Heart right ventricle (tissue), 16 donors: ENCODE measurements at regions of chr7 and their contacts with region 1.

Region 1: DNA sequence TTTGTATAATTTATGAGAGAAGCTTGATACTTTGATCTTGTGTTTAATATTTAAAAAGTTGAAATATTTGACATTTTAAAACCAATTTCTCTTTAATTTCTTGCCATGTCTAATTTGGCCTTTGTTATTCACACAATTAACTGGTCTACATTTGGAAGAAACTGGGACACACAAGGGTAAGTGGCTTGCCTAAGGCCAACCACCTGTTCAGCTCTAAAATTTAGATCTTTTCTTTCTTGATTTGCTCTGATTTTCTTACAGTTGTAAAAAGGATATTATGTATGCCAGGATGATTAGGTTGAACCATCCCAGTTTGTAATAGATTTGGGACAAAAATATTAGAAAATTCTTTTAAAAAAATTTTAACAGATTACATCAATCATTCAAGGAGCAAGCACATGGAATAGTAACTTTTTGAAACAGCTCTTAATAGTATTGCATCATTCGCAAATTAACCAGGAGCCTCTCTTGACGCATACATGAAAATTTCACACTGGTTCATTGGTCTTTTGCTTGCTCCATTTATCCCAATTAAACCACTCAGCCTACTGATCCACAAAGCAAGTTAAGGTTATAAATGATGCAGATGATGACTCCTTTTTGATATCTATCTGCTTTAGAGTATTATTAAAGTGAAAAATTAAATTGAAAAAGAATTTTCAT is 222.4 kb upstream of the SLC26A5 start:
- DNase-seq: no peak
- ATAC-seq: no peak
- H3K4me3 ChIP-seq: no peak overlapping the region
- H3K27ac ChIP-seq: no peak overlapping the region
- H3K4me1 ChIP-seq: no peaks in the 10 kb centered on the region
- H3K27me3 ChIP-seq: no peaks in the 10 kb centered on the region
- CTCF ChIP-seq: no peak

Region 2: DNA sequence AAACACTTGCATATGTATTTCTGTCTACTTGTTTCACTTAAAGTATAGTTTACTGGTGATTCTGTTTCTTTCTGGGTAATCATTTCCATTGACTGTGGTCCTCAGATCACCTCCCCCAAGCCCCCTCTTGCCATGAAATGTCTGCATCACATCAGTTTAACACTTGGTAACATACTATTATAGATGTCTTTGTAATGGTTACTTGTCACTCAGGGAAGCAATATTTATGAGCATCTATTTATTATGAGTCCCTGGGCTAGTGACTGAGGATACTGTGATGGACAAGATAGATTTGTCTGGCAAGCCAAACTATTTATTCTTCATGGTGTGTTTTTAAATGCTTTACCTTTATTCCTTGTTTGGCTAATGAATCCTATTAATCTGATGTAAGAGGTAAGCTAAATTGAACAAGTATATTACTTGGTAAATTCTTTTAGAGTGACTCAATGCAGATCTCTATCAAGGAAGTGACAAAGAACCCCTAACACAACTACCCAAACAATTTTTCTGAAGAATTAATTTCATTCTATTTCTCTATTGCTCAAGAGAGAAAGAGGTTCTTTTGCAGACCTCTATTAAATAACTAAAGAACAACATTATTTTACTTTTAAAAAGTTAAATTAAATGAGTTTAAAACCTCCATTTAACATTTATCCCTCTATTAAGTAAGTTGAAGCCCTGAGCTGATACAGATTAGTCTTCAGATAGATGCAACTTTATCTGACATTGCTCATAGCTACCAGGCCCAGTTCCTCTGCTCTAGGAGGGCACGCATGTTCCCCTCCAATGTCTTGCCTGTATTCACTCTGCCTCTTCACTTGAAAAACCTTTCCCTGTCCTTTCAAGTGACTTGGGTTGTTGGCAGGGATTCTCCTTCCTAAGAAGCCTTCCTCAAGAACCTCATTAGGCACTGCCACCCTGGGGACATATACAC is 50.3 kb after region 1 on chr7:
- intact Hi-C with region 1: loop called in 1 of 10 experiments (anchors 1 kb)
- DNase-seq: no peak
- ATAC-seq: no peak
- H3K4me3 ChIP-seq: no peak overlapping the region
- H3K27ac ChIP-seq: no peak overlapping the region
- H3K4me1 ChIP-seq: no peaks in the 10 kb centered on the region
- H3K27me3 ChIP-seq: no peaks in the 10 kb centered on the region
- CTCF ChIP-seq: no peak